ENCODE measurements at regions of chr16 and their contacts with region 1.

Region 1: GRCh38 chr16:55622930-55623561 is 32.7 kb upstream of the SLC6A2 start:
- DNase-seq: no peak
- H3K4me3 ChIP-seq: no peak overlapping the region
- H3K27ac ChIP-seq: no peak overlapping the region
- H3K4me1 ChIP-seq: no peaks in the 10 kb centered on the region
- H3K27me3 ChIP-seq: no peaks in the 10 kb centered on the region
- CTCF ChIP-seq: no peak

Region 2: DNA sequence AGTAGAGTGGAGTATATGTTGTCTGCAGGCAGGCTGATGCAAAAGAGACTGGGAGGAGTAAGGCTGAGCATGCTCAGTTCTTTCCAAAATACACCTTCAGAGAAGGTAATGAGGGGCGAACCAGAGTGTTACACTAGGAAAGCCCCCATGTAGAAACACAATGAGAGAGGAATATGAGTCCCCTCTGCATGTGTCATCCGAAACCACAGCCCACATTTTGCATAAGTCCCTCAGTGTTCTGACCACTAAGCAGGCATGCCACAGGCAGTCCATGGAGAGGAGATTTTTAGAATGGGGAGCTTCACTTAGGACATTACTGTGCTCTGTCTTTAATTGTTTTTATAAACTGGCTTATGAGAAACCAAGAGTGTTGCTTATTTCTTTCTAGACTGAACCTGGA is 64.8 kb after region 1 on chr16:
- intact Hi-C with region 1: loop called (anchors 10 kb)
- DNase-seq: no peak
- H3K4me3 ChIP-seq: no peak overlapping the region
- H3K27ac ChIP-seq: no peak overlapping the region
- H3K4me1 ChIP-seq: no peaks in the 10 kb centered on the region
- H3K27me3 ChIP-seq: peaks cover 0 to 4% of the 10 kb centered on the region in 2 donors
- CTCF ChIP-seq: no peak